A549 (cell line): ENCODE measurements at regions of chr12 and their contacts with region 1.

Region 1: DNA sequence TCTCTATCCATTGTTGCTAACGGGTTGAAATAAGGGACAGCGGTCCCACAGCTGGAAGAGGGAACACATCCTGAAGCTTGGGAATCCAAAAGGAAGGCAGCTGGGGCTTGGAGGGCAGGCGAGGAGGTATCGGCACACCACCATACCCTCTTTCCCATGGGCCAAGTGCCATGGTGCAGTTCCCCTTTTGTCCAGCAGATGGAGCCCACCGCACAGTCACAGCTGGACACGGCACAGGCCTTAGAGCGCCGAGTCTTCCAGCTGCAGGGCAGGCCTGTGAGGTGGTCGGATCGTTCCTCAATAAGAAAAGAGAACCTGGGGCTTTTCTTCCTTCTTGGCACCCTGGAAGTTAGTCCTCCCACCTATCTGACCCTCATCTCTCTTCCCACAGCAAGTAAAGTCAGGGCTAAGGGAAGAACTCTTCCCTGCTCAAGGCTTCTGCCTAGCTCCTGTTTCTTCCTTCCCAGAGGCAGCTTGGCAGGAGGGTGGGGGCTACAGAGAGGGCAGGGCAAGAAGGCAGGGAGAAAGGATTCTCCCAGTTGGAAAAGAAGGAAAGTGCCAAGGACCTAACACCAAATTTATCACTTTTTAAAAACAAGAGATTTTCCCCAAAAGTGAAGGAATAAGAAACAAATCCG is 8.6 kb downstream of the PPP1R1A start:
- DNase-seq: peak; percentile 76 to 85
- ATAC-seq: peak; percentile 88 to 98
- H3K4me3 ChIP-seq: no peak overlapping the region
- H3K27ac ChIP-seq: peak overlapping the region in 1 of 2 experiments; percentile 55; a peak in 1 of 6 replicates
- H3K4me1 ChIP-seq: no peaks in the 10 kb centered on the region
- CTCF ChIP-seq: peak; percentile 84
- EP300 ChIP-seq: no peak
- POLR2A ChIP-seq: no peak; the same call in 1 of the 2 replicates
- RAD21 ChIP-seq: peak; percentile 69 to 76

Region 2: GRCh38 chr12:54428050-54429013 is 151.5 kb before region 1 on chr12:
- CTCF ChIA-PET with region 1: no interaction called
- POLR2A ChIA-PET with region 1: no interaction called
- DNase-seq: no peak
- ATAC-seq: peak in 1 of 2 experiments; percentile 14; a peak in 2 of 6 replicates
- H3K4me3 ChIP-seq: no peak overlapping the region
- H3K27ac ChIP-seq: peak overlapping the region in 1 of 2 experiments; percentile 30; a peak in 3 of 6 replicates
- H3K4me1 ChIP-seq: peaks cover 32% of the 10 kb centered on the region
- CTCF ChIP-seq: no peak
- EP300 ChIP-seq: no peak
- POLR2A ChIP-seq: no peak
- RAD21 ChIP-seq: no peak

Region 3: DNA sequence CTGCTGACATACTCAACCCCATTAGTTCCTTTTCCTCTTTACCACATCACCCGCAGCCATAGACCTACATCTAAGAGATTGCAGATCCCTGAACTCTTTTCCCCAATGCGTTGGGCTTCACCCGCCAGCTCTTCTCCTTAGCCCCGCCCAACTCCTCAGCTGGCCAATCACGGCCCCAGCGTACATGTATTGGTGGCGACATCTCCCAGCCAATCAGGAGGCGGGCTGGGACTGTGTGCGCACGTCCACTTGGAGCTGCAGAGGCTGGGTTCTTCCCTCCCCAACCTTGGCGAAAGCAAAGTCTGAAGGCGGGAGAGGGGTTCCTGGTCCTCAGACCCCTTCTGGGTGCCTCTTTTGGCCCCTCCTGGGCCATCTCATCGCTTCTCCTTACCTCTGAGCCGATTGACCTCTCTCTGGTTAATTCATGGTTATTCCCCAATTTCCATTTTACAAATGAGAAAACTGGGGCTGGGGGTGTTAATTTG is 19.4 kb before region 1 on chr12:
- CTCF ChIA-PET with region 1: interaction called, 65 read pairs
- POLR2A ChIA-PET with region 1: no interaction called
- DNase-seq: peak; percentile 80 to 94
- ATAC-seq: peak; percentile 91 to 99
- H3K4me3 ChIP-seq: peak overlapping the region; percentile 39
- H3K27ac ChIP-seq: peak overlapping the region in 1 of 2 experiments; percentile 44; a peak in 2 of 6 replicates
- H3K4me1 ChIP-seq: peaks cover under 1% of the 10 kb centered on the region; the same call in 1 of the 3 replicates
- CTCF ChIP-seq: no peak
- EP300 ChIP-seq: no peak
- POLR2A ChIP-seq: no peak
- RAD21 ChIP-seq: no peak

Region 4: DNA sequence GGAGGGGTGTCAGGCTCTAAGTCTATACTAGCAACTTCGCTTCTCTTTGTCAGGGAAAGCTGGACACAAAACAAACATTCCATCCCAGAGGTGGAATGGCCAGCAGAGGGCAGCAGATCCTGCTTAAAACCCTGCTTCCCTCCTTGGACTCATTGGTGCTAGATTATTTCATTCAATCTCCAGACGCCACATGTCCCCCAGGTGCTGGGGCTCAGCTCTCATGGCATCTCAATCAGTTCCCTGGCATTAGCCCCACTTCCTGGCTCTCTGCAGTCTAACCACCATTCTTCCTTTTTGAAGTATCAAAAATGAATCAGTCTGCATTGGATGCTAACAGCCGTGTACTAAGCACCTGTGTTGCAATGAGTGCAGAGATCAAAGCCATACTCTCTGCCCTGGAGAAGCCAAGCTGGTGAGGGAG is 16.7 kb after region 1 on chr12:
- CTCF ChIA-PET with region 1: interaction called, 100 read pairs
- POLR2A ChIA-PET with region 1: interaction called, 3 read pairs
- DNase-seq: peak; percentile 60 to 72
- ATAC-seq: peak; percentile 70 to 92
- H3K4me3 ChIP-seq: no peak overlapping the region
- H3K27ac ChIP-seq: no peak overlapping the region
- H3K4me1 ChIP-seq: no peaks in the 10 kb centered on the region
- CTCF ChIP-seq: peak; percentile 86
- EP300 ChIP-seq: no peak
- POLR2A ChIP-seq: no peak
- RAD21 ChIP-seq: peak; percentile 43 to 56; a peak in 4 of 5 replicates

Region 5: DNA sequence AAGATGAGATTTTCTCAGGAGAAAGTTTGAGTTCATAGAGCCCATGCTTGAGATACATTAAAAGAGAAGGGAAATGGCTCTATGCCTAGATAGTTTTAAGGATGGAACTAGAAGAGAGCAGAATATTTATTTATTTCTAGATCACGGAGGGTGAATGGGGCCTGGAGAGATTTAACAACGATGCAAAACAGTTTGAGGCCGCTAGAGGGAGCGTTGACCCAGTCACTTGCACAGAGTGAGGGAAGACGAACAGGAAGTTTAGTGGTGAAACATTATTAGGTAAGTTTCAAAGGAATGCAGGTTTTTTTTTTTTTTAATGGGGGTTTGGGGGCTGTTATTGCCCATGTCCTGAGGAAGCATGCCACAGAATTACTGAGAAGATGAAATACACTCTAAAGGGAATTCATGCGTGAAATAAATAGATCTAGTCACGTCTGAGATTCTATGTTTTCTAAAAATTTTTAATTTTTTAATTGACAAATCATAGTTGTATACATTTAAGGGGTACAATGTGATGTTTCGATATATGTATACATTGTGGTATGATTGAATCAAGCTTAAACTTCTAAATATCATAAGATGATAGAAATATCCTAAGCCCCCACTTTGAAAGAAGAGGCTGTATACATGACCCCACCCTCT is 23.5 kb after region 1 on chr12:
- CTCF ChIA-PET with region 1: interaction called, 100 read pairs
- POLR2A ChIA-PET with region 1: no interaction called
- DNase-seq: peak; percentile 84 to 87
- ATAC-seq: peak; percentile 77 to 96; a peak in 5 of 6 replicates
- H3K4me3 ChIP-seq: no peak overlapping the region
- H3K27ac ChIP-seq: no peak overlapping the region
- H3K4me1 ChIP-seq: no peaks in the 10 kb centered on the region
- CTCF ChIP-seq: peak; percentile 66
- EP300 ChIP-seq: no peak
- POLR2A ChIP-seq: no peak
- RAD21 ChIP-seq: peak; percentile 33 to 43; a peak in 3 of 5 replicates

Region 6: DNA sequence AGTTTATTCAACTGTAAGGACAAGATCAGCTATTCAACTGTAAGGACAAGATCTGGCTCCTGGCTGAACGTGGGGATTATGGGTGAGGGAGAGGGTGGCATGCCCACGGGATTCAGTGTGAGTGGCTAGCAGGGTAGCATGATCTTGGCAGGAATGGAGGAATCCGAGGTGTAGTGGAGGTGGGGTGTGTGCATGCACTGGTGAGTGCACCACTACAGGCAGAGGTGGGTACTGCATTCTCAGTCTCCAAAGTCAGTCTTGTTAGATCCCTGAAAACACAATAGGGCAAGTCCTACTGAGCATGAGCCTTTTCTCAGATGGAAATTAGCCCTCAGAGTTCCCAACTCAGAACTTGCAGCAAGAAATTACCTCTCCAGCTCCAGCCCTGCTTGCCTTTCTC is 100.6 kb after region 1 on chr12:
- CTCF ChIA-PET with region 1: no interaction called
- POLR2A ChIA-PET with region 1: no interaction called
- DNase-seq: peak; percentile 43 to 57
- ATAC-seq: peak; percentile 71 to 95; a peak in 5 of 6 replicates
- H3K4me3 ChIP-seq: no peak overlapping the region
- H3K27ac ChIP-seq: no peak overlapping the region
- H3K4me1 ChIP-seq: no peaks in the 10 kb centered on the region
- CTCF ChIP-seq: 0 out of 3 replicates have a peak, but pooled peaks have one; percentile 12
- EP300 ChIP-seq: no peak
- POLR2A ChIP-seq: no peak
- RAD21 ChIP-seq: no peak

Region 7: GRCh38 chr12:54950071-54950727 is 370.4 kb after region 1 on chr12:
- CTCF ChIA-PET with region 1: no interaction called
- POLR2A ChIA-PET with region 1: no interaction called
- DNase-seq: no peak
- ATAC-seq: no peak
- H3K4me3 ChIP-seq: no peak overlapping the region
- H3K27ac ChIP-seq: no peak overlapping the region
- H3K4me1 ChIP-seq: no peaks in the 10 kb centered on the region
- CTCF ChIP-seq: no peak
- EP300 ChIP-seq: no peak
- POLR2A ChIP-seq: no peak
- RAD21 ChIP-seq: no peak